ENCODE measurements at regions of chr1 and their contacts with region 1.

Region 1: DNA sequence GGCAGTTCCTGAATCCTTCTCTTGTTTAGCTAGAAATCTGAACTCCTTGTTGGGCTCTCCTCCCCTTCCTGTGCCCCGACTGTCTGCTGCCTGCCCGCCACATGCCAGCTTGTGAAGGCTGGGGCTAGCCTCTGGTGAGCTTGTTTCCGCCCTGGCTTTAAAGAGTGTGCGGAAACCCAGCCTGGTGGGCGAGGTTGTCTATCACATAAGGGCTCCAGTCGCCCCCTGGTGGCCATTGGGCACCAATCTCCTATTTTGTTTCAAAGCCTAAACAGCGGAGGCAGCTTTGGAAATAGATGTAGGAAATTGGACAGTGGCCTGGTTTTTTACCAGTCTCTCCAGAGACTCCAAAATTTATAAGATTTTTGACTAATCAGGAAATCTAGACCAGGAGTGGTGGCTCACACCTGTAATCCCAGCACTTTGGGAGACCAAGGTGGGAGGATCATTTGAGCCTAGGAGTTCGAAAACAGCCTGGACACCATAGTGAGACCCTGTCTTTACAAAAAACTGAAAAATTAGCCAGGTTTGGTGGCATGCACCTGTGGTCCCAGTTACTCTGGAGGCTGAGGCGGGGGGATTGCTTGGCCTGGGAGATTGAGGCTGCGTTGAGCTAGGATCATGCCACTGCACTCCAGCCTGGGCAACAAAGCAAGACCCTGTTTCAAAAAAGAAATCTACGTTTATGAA is 9.8 kb downstream of the ATP8B2 start:
- DNase-seq: peak; percentile 83 to 88
- ATAC-seq: peak; percentile 80 to 96; a peak in 5 of 6 replicates
- H3K4me3 ChIP-seq: no peak overlapping the region
- H3K27ac ChIP-seq: peak overlapping the region; percentile 38 to 45; a peak in 5 of 6 replicates
- H3K4me1 ChIP-seq: peaks cover 14% of the 10 kb centered on the region
- CTCF ChIP-seq: peak; percentile 93
- EP300 ChIP-seq: no peak
- POLR2A ChIP-seq: no peak
- RAD21 ChIP-seq: peak; percentile 67 to 72

Region 2: DNA sequence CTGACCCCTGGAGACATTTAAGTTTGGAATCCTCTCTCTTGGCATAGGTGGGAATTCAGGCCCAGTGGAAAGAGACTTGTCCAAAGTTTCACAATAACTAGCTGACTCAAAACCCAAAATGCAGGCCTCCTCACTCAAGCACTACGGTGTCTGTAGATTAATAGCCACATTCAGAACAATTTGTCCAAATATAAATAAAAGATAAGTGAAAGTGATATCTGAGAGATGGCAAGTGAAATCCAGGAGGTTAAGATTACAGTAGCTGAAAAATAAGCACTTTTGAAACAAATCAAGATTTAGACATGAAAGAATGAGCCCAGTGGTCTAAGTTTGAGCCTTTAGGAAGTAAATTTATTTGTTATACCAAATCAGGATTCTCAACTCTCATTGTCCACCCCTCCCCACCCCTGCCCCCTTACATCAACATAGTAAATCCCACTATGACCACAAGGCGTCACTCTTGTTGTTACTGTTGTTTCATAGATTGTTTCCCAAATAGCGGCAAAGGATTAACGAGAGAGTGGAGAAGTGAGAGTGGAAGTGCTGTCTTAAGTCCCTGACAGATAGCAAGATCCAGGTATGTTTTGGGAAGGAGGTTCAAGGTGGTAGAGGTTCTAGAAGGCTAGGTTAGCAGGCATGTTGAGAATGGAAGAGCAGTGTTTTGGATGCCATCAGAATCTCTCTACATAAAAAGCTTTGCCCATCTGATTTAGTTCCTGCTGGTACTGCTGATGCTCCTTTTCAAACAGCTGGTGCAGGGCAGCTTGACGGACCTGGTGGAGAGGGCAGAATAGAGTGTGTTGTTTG is 136.2 kb before region 1 on chr1:
- CTCF ChIA-PET with region 1: interaction called, 12 read pairs
- POLR2A ChIA-PET with region 1: no interaction called
- DNase-seq: peak; percentile 73 to 82
- ATAC-seq: peak; percentile 84 to 85
- H3K4me3 ChIP-seq: no peak overlapping the region
- H3K27ac ChIP-seq: no peak overlapping the region
- H3K4me1 ChIP-seq: peaks cover 8% of the 10 kb centered on the region; the same call in 2 of the 3 replicates
- CTCF ChIP-seq: peak; percentile 70
- EP300 ChIP-seq: no peak
- POLR2A ChIP-seq: no peak
- RAD21 ChIP-seq: peak; percentile 63 to 71

Region 3: GRCh38 chr1:154241703-154242351 is 93.3 kb before region 1 on chr1:
- CTCF ChIA-PET with region 1: no interaction called
- POLR2A ChIA-PET with region 1: no interaction called
- DNase-seq: no peak
- ATAC-seq: no peak
- H3K4me3 ChIP-seq: no peak overlapping the region
- H3K27ac ChIP-seq: no peak overlapping the region
- H3K4me1 ChIP-seq: no peaks in the 10 kb centered on the region
- CTCF ChIP-seq: no peak
- EP300 ChIP-seq: no peak
- POLR2A ChIP-seq: no peak
- RAD21 ChIP-seq: no peak

Region 4: DNA sequence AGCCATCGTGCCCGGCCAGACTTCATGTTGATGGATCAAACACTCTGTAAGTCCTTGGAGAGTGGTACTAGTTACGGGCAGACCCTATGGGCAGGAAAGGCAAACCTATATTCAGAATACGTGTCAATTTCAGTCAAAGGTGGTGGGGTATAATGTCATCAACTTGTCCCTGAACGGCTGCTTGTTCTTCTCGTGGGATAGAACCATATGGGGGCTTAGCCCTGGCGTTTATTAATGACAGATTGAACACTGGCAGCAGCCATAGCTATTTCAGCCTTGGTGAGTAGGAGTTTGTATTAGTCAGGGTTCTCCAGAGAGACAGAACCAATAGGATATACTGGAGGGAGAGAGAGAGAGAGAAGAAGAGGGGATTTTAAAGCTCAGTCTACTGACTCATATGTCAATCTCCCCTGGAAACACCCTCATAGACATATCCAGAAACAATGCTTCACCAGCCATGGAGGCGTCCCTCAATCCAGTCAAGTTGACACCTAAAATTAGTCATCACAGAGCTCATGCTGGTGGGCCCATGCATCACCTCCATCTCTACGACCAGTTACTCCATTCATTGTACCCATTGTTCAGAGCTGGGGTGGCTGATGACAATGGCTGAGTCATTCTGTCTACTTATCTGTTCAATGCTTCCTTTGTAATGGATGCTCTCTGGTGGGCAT is 30.4 kb before region 1 on chr1:
- CTCF ChIA-PET with region 1: interaction called, 10 read pairs
- POLR2A ChIA-PET with region 1: no interaction called
- DNase-seq: no peak
- ATAC-seq: peak in 1 of 2 experiments; percentile 49; a peak in 3 of 6 replicates
- H3K4me3 ChIP-seq: no peak overlapping the region
- H3K27ac ChIP-seq: no peak overlapping the region
- H3K4me1 ChIP-seq: no peaks in the 10 kb centered on the region
- CTCF ChIP-seq: no peak
- EP300 ChIP-seq: no peak
- POLR2A ChIP-seq: no peak
- RAD21 ChIP-seq: no peak

Region 5: GRCh38 chr1:154344977-154345837 is 10.0 kb after region 1 on chr1:
- CTCF ChIA-PET with region 1: interaction called, 268 read pairs
- POLR2A ChIA-PET with region 1: no interaction called
- DNase-seq: peak; percentile 41 to 76
- ATAC-seq: peak in 1 of 2 experiments; percentile 78; a peak in 3 of 6 replicates
- H3K4me3 ChIP-seq: no peak overlapping the region
- H3K27ac ChIP-seq: no peak overlapping the region
- H3K4me1 ChIP-seq: no peaks in the 10 kb centered on the region
- CTCF ChIP-seq: peak; percentile 62
- EP300 ChIP-seq: no peak
- POLR2A ChIP-seq: no peak
- RAD21 ChIP-seq: peak; percentile 39 to 66; a peak in 4 of 5 replicates

Region 6: GRCh38 chr1:154358519-154358918 is 23.3 kb after region 1 on chr1:
- CTCF ChIA-PET with region 1: interaction called, 36 read pairs
- POLR2A ChIA-PET with region 1: no interaction called
- DNase-seq: no peak
- ATAC-seq: no peak
- H3K4me3 ChIP-seq: no peak overlapping the region
- H3K27ac ChIP-seq: no peak overlapping the region
- H3K4me1 ChIP-seq: peaks cover 3% of the 10 kb centered on the region; the same call in 1 of the 3 replicates
- CTCF ChIP-seq: no peak
- EP300 ChIP-seq: no peak
- POLR2A ChIP-seq: no peak
- RAD21 ChIP-seq: no peak

Region 7: GRCh38 chr1:154379301-154379700 is 44.1 kb after region 1 on chr1:
- CTCF ChIA-PET with region 1: no interaction called
- POLR2A ChIA-PET with region 1: no interaction called
- DNase-seq: no peak
- ATAC-seq: no peak
- H3K4me3 ChIP-seq: no peak overlapping the region
- H3K27ac ChIP-seq: no peak overlapping the region
- H3K4me1 ChIP-seq: peaks cover 5% of the 10 kb centered on the region; the same call in 1 of the 3 replicates
- CTCF ChIP-seq: no peak
- EP300 ChIP-seq: no peak
- POLR2A ChIP-seq: no peak
- RAD21 ChIP-seq: no peak

Region 8: DNA sequence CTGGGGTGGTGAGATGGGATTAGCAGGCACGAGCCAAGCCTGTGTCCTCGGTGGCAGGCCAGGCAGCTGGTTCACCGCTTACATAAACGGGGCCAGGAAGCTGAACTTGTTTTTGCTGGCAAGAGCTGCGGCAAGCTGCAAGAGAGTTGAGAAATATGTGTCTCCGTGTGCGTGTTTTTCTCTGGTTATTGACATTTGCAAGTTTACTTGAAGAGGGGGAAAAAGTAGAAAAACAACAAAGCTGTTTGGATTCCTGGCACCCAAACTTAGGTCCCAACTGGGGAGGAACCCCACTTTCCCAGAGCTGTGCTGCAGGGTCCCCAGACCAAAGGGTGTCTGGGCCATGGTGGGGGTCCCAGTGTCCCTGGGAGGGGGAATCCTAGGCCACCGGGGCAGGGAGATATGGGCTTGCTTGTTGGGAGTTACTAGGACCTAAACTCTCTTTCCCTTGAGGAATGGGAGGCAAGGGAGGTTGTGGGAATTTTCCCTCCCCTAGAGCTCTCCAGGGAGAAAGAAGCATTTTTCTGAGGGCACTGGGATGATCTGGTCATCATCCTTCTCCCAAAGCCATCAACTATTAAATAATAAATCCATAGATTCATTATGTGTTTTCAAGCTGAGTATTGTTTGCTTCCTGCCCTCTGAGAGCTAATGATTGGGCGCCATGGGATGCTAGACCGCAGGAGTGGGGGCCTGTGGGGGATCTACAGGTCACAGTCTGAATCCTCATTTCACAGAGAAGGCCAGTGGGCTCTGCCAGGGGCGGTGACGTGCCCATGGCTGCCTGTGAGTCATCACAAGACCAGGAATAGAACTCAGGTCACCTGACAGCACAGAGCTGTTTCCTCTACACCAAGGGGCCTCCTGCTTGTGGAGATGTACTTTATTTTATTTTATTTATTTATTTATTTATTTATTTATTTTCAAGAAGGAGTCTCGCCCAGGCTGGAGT is 84.7 kb after region 1 on chr1:
- CTCF ChIA-PET with region 1: interaction called, 10 read pairs
- POLR2A ChIA-PET with region 1: no interaction called
- DNase-seq: peak; percentile 80 to 86
- ATAC-seq: peak; percentile 55 to 64
- H3K4me3 ChIP-seq: peak overlapping the region; percentile 27; the same call in 2 of the 3 replicates
- H3K27ac ChIP-seq: peak overlapping the region; percentile 94 to 96
- H3K4me1 ChIP-seq: peaks cover 75% of the 10 kb centered on the region
- CTCF ChIP-seq: no peak
- EP300 ChIP-seq: peak; percentile 25 to 44; a peak in 2 of 5 replicates
- POLR2A ChIP-seq: no peak
- RAD21 ChIP-seq: no peak

Region 9: GRCh38 chr1:154479764-154480421 is 144.7 kb after region 1 on chr1:
- CTCF ChIA-PET with region 1: interaction called, 22 read pairs
- POLR2A ChIA-PET with region 1: no interaction called
- DNase-seq: peak; percentile 86 to 93
- ATAC-seq: peak; percentile 95 to 99
- H3K4me3 ChIP-seq: no peak overlapping the region
- H3K27ac ChIP-seq: peak overlapping the region; percentile 48 to 67; a peak in 3 of 6 replicates
- H3K4me1 ChIP-seq: peaks cover 9% of the 10 kb centered on the region; the same call in 2 of the 3 replicates
- CTCF ChIP-seq: peak; percentile 94
- EP300 ChIP-seq: no peak
- POLR2A ChIP-seq: no peak
- RAD21 ChIP-seq: peak; percentile 95 to 97